ENCODE measurements at regions of chr6 and their contacts with region 1.

Region 1: DNA sequence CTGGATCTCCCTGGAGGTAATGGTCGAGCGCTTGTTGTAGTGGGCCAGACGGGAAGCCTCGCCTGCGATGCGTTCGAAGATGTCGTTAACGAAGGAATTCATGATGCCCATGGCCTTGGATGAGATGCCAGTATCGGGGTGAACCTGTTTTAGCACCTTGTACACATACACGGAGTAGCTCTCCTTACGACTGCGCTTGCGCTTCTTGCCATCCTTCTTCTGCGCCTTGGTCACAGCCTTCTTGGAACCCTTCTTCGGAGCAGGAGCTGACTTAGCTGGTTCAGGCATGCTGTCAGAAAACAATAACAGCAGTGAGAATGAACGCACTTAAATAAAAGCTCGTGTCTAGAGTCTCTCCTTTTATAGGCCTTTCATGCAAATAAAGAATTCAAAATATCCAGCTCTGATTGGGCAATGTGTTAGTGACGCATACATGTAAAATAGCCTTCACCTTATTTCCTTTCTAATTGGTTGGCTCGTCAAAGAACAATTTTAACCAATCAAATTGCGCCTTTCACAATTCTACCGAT is 129.2 kb downstream of the HFE start:
- DNase-seq: peak; percentile 83 to 98 (median 90)
- ATAC-seq: peak; percentile 69
- H3K4me3 ChIP-seq: peak overlapping the region; percentile 61
- H3K27ac ChIP-seq: peak overlapping the region; percentile 91
- H3K4me1 ChIP-seq: peaks cover 15 to 23% of the 10 kb centered on the region in 2 experiments
- H3K27me3 ChIP-seq: no peaks in the 10 kb centered on the region
- CTCF ChIP-seq: no peak; a peak in 1 of 6 replicates
- EP300 ChIP-seq: no peak
- POLR2A ChIP-seq: peak; percentile 100
- RAD21 ChIP-seq: no peak; a peak in 1 of 4 replicates

Region 2: DNA sequence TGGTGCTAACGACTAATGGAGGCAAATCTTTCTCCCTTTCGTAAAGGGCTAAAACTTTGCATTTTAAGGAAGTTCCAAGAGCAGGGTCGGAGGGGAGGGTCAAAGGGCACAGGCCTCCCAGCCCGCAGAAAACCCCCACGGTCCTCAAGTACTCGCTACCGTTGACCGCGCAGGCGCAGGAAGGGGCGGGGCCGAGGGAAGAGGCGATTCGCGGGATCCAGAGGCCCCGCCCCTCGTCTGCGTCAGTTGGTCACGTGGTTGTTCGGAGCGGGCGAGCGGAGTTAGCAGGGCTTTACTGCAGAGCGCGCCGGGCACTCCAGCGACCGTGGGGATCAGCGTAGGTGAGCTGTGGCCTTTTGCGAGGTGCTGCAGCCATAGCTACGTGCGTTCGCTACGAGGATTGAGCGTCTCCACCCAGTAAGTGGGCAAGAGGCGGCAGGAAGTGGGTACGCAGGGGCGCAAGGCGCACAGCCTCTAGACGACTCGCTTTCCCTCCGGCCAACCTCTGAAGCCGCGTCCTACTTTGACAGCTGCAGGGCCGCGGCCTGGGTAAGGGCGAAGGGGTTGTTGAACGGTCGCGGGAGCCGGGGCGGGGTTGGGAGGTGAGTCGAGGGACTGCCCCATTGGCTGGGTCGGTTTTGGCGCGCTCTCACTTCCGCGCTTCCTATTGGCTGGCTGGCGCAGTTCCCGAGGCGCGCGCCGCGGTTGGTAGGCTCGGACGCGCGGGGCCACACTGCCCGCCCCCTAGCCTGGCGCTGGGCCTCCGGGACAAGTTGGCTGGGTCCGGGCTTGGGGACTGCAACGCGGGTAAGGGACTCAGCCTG is 1441.5 kb before region 1 on chr6 and contains the start of gene GMNN:
- CTCF ChIA-PET with region 1: no interaction called
- POLR2A ChIA-PET with region 1: no interaction called
- in situ Hi-C with region 1: no loop called
- intact Hi-C with region 1: loop called (anchors 10 kb)
- DNase-seq: peak; percentile 99 to 100 (median 99)
- ATAC-seq: peak; percentile 95
- H3K4me3 ChIP-seq: peak within 1 kb of the TSS; percentile 67
- H3K27ac ChIP-seq: peak within 1 kb of the TSS; percentile 99
- H3K4me1 ChIP-seq: peaks cover 8 to 12% of the 10 kb centered on the region in 2 experiments; a peak in 4 of 5 replicates
- H3K27me3 ChIP-seq: no peaks in the 10 kb centered on the region
- CTCF ChIP-seq: no peak
- EP300 ChIP-seq: peak; percentile 7
- POLR2A ChIP-seq: peak; percentile 99
- RAD21 ChIP-seq: no peak
- polyA plus RNA-seq, gene GMNN: 331 to 370 TPM

Region 3: GRCh38 chr6:25835442-25836283 is 380.8 kb before region 1 on chr6:
- CTCF ChIA-PET with region 1: no interaction called
- POLR2A ChIA-PET with region 1: no interaction called
- in situ Hi-C with region 1: no loop called
- intact Hi-C with region 1: no loop called
- DNase-seq: no peak
- ATAC-seq: no peak
- H3K4me3 ChIP-seq: no peak overlapping the region
- H3K27ac ChIP-seq: no peak overlapping the region
- H3K4me1 ChIP-seq: no peaks in the 10 kb centered on the region
- H3K27me3 ChIP-seq: peaks cover 17 to 23% of the 10 kb centered on the region in 2 experiments; a peak in 4 of 5 replicates
- CTCF ChIP-seq: no peak
- EP300 ChIP-seq: no peak
- POLR2A ChIP-seq: no peak
- RAD21 ChIP-seq: no peak

Region 4: DNA sequence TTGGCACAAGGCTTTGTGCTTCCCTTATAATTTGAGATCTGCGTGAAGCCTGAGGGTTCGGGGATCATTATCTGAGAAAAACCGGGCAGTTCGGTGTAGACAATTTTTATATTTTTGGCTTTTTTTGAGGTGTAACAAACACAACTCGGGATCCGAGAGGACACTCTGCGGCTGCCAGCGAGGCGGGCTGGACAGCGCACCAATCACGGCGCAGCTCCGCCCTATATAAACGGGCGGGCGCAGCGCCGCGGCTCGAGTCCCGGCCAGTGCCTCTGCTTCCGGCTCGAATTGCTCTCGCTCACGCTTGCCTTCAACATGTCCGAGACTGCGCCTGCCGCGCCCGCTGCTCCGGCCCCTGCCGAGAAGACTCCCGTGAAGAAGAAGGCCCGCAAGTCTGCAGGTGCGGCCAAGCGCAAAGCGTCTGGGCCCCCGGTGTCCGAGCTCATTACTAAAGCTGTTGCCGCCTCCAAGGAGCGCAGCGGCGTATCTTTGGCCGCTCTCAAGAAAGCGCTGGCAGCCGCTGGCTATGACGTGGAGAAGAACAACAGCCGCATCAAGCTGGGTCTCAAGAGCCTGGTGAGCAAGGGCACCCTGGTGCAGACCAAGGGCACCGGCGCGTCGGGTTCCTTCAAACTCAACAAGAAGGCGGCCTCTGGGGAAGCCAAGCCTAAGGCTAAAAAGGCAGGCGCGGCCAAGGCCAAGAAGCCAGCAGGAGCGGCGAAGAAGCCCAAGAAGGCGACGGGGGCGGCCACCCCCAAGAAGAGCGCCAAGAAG is 60.2 kb before region 1 on chr6:
- CTCF ChIA-PET with region 1: no interaction called
- POLR2A ChIA-PET with region 1: interaction called, 175 read pairs
- in situ Hi-C with region 1: no loop called
- intact Hi-C with region 1: loop called (anchors 1 kb)
- DNase-seq: peak; percentile 96 to 97 (median 97)
- ATAC-seq: peak; percentile 78
- H3K4me3 ChIP-seq: peak overlapping the region; percentile 65
- H3K27ac ChIP-seq: peak overlapping the region; percentile 85
- H3K4me1 ChIP-seq: peaks cover 12 to 18% of the 10 kb centered on the region in 2 experiments; a peak in 4 of 5 replicates
- H3K27me3 ChIP-seq: no peaks in the 10 kb centered on the region
- CTCF ChIP-seq: no peak
- EP300 ChIP-seq: peak; percentile 29
- POLR2A ChIP-seq: peak; percentile 100
- RAD21 ChIP-seq: 0 out of 4 replicates have a peak, but pooled peaks of 1 of the 2 experiments have one; percentile 21

Region 5: GRCh38 chr6:26234421-26235296 is 18.2 kb after region 1 on chr6:
- CTCF ChIA-PET with region 1: no interaction called
- POLR2A ChIA-PET with region 1: interaction called, 147 read pairs
- in situ Hi-C with region 1: no loop called
- intact Hi-C with region 1: loop called (anchors 1 kb)
- DNase-seq: peak; percentile 71 to 93 (median 83)
- ATAC-seq: peak; percentile 89
- H3K4me3 ChIP-seq: peak overlapping the region; percentile 40
- H3K27ac ChIP-seq: peak overlapping the region; percentile 73
- H3K4me1 ChIP-seq: peaks cover 16 to 20% of the 10 kb centered on the region in 2 experiments; a peak in 4 of 5 replicates
- H3K27me3 ChIP-seq: no peaks in the 10 kb centered on the region
- CTCF ChIP-seq: no peak
- EP300 ChIP-seq: no peak; the same call in 1 of the 2 replicates
- POLR2A ChIP-seq: peak; percentile 99
- RAD21 ChIP-seq: no peak; a peak in 1 of 4 replicates

Region 6: GRCh38 chr6:26295691-26296555 is 79.5 kb after region 1 on chr6:
- CTCF ChIA-PET with region 1: no interaction called
- POLR2A ChIA-PET with region 1: interaction called, 89 read pairs
- in situ Hi-C with region 1: no loop called
- intact Hi-C with region 1: no loop called
- DNase-seq: peak; percentile 75 to 95 (median 79)
- ATAC-seq: peak; percentile 63
- H3K4me3 ChIP-seq: no peak overlapping the region
- H3K27ac ChIP-seq: peak overlapping the region; percentile 86
- H3K4me1 ChIP-seq: peaks cover 0 to 45% of the 10 kb centered on the region in 2 experiments; a peak in 4 of 5 replicates
- H3K27me3 ChIP-seq: no peaks in the 10 kb centered on the region
- CTCF ChIP-seq: no peak
- EP300 ChIP-seq: peak; percentile 97
- POLR2A ChIP-seq: no peak
- RAD21 ChIP-seq: peak; percentile 15 to 46; a peak in 2 of 4 replicates

Region 7: GRCh38 chr6:26445934-26446667 is 229.7 kb after region 1 on chr6:
- CTCF ChIA-PET with region 1: no interaction called
- POLR2A ChIA-PET with region 1: no interaction called
- in situ Hi-C with region 1: no loop called
- intact Hi-C with region 1: no loop called
- DNase-seq: no peak
- ATAC-seq: peak; percentile 32; the same call in 2 of the 3 replicates
- H3K4me3 ChIP-seq: no peak overlapping the region
- H3K27ac ChIP-seq: no peak overlapping the region
- H3K4me1 ChIP-seq: 0 out of 5 replicates have a peak, but pooled peaks cover 0 to 3% of the 10 kb centered on the region in 2 experiments
- H3K27me3 ChIP-seq: no peaks in the 10 kb centered on the region
- CTCF ChIP-seq: no peak
- EP300 ChIP-seq: no peak
- POLR2A ChIP-seq: no peak
- RAD21 ChIP-seq: no peak

Region 8: DNA sequence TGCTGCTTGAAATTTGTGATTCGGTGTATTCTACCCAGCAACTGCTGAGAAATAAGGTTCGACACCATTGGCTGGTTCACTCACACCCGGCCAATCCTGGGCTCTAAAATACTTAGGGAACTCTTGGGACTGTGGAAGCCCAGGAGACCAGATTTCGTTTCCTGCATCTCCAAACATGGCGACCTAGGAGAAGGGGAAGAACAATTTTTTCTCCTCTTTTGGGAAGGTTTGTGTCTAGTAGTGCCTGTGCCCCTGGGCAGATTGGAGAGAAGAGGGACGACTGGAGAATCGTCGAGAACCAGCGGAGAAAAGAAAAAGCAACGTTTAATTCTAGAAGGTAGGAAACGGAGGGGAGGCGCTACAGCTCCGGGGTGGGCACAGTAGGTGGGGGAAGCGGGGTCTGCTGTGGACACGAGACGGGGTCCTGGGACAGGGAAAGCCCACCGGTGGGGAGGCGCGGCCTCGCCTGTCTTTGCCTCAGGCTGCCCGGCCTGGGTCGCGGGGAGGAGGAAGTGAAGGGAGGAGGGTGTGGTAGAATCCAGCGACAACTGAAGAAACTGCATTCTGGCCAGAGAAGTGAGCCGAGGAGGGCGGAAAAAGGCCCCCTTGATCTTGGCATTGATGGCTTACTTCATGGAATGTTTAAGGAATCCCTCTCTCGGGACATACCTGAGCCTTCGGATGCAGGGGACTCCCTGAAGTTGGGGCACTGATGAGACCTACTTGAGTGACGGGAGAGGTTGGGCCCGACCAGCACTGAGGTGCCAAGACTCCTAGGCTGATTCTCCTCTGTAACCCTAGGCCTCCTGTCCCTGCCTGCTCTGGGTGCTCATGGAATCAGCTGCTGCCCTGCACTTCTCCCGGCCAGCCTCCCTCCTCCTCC is 241.6 kb after region 1 on chr6 and contains the start of gene BTN2A1:
- CTCF ChIA-PET with region 1: no interaction called
- POLR2A ChIA-PET with region 1: no interaction called
- in situ Hi-C with region 1: no loop called
- intact Hi-C with region 1: no loop called
- DNase-seq: peak; percentile 94 to 96 (median 96)
- ATAC-seq: peak; percentile 99
- H3K4me3 ChIP-seq: peak within 1 kb of the TSS; percentile 93
- H3K27ac ChIP-seq: peak within 1 kb of the TSS; percentile 87
- H3K4me1 ChIP-seq: peaks cover 6 to 14% of the 10 kb centered on the region in 2 experiments; a peak in 3 of 5 replicates
- H3K27me3 ChIP-seq: no peaks in the 10 kb centered on the region
- CTCF ChIP-seq: 0 out of 6 replicates have a peak, but pooled peaks of 2 of the 3 experiments have one; percentile 8 to 18
- EP300 ChIP-seq: no peak
- POLR2A ChIP-seq: peak; percentile 80
- RAD21 ChIP-seq: no peak
- polyA plus RNA-seq, gene BTN2A1: 7.0 to 16.4 TPM

Region 9: GRCh38 chr6:26485112-26485780 is 268.8 kb after region 1 on chr6:
- CTCF ChIA-PET with region 1: no interaction called
- POLR2A ChIA-PET with region 1: no interaction called
- in situ Hi-C with region 1: no loop called
- intact Hi-C with region 1: no loop called
- DNase-seq: no peak
- ATAC-seq: peak; percentile 23; the same call in 1 of the 3 replicates
- H3K4me3 ChIP-seq: no peak overlapping the region
- H3K27ac ChIP-seq: no peak overlapping the region
- H3K4me1 ChIP-seq: peaks cover 0 to 9% of the 10 kb centered on the region in 2 experiments; a peak in 2 of 5 replicates
- H3K27me3 ChIP-seq: no peaks in the 10 kb centered on the region
- CTCF ChIP-seq: no peak
- EP300 ChIP-seq: no peak
- POLR2A ChIP-seq: no peak
- RAD21 ChIP-seq: no peak

Region 10: DNA sequence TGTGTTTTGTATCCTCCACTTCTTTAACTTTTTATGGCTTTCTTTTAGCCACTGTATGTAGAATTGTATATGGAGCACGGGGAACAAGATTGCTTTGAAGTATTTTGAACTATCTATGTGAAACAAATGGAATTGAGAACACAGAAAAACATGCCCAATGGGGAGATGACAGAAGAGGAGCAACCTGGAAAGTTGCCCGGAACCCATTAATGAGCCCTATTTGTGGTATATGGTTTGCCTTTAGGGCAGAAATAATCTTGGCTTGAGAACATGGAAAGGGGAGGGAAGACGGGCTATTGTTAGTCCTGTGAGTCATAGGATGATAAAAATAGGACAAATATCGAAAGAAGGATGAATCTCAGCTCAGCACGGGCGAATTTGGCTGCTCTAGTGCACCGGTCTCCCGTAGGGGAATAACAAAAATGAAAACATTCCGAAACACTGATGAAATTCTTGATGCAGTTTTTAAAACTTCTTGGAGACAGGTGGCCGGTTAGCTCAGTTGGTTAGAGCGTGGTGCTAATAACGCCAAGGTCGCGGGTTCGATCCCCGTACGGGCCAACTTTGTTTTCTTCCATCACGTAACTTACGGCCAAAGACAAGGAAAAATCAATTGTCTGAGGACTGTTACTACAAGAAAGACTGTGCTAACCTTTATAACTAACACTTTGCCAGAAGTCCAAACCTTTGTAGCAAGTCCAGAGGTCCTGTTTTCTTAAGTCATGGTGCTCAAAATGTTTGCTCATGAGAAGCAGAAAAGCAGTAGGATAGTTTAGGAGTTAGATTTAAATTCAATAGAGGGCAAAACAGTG is 337.4 kb after region 1 on chr6:
- CTCF ChIA-PET with region 1: no interaction called
- POLR2A ChIA-PET with region 1: interaction called, 20 read pairs
- in situ Hi-C with region 1: no loop called
- intact Hi-C with region 1: no loop called
- DNase-seq: peak; percentile 62 to 93 (median 72)
- ATAC-seq: peak; percentile 66
- H3K4me3 ChIP-seq: peak overlapping the region; percentile 51
- H3K27ac ChIP-seq: peak overlapping the region; percentile 74
- H3K4me1 ChIP-seq: peaks cover 5 to 20% of the 10 kb centered on the region in 2 experiments; a peak in 4 of 5 replicates
- H3K27me3 ChIP-seq: no peaks in the 10 kb centered on the region
- CTCF ChIP-seq: no peak
- EP300 ChIP-seq: peak; percentile 73; the same call in 1 of the 2 replicates
- POLR2A ChIP-seq: no peak
- RAD21 ChIP-seq: no peak; a peak in 1 of 4 replicates

Region 11: GRCh38 chr6:27893059-27893835 is 1676.8 kb after region 1 on chr6:
- CTCF ChIA-PET with region 1: no interaction called
- POLR2A ChIA-PET with region 1: interaction called, 11 read pairs
- in situ Hi-C with region 1: no loop called
- intact Hi-C with region 1: loop called (anchors 5 kb)
- DNase-seq: peak; percentile 84 to 99 (median 92)
- ATAC-seq: peak; percentile 71
- H3K4me3 ChIP-seq: peak overlapping the region; percentile 79
- H3K27ac ChIP-seq: peak overlapping the region; percentile 95
- H3K4me1 ChIP-seq: peaks cover 19 to 38% of the 10 kb centered on the region in 2 experiments
- H3K27me3 ChIP-seq: no peaks in the 10 kb centered on the region
- CTCF ChIP-seq: peak in 1 of 3 experiments; percentile 14; a peak in 1 of 6 replicates
- EP300 ChIP-seq: peak; percentile 62; the same call in 1 of the 2 replicates
- POLR2A ChIP-seq: peak; percentile 100
- RAD21 ChIP-seq: no peak

Measured in K562 (cell line).